Activated naive CD4-positive, alpha-beta T cell treated with anti-CD3 and anti-CD28 coated beads for 36 hours (primary cell): ENCODE measurements at regions of chr1 and their contacts with region 1.

Region 1: GRCh38 chr1:91282695-91283420 is 121.8 kb downstream of the HFM1 start:
- DNase-seq: peak; percentile 65
- H3K4me3 Mint-ChIP-seq: no peak overlapping the region
- H3K27ac Mint-ChIP-seq: no peak overlapping the region
- H3K4me1 Mint-ChIP-seq: peaks cover 1% of the 10 kb centered on the region
- H3K27me3 Mint-ChIP-seq: peaks cover 6% of the 10 kb centered on the region

Region 2: GRCh38 chr1:90579212-90579802 is 703.6 kb before region 1 on chr1:
- CTCF ChIA-PET with region 1: no interaction called
- intact Hi-C with region 1: loop called (anchors 1 kb)
- DNase-seq: no peak
- H3K4me3 Mint-ChIP-seq: no peak overlapping the region
- H3K27ac Mint-ChIP-seq: no peak overlapping the region
- H3K4me1 Mint-ChIP-seq: no peaks in the 10 kb centered on the region
- H3K27me3 Mint-ChIP-seq: peaks cover 6% of the 10 kb centered on the region

Region 3: DNA sequence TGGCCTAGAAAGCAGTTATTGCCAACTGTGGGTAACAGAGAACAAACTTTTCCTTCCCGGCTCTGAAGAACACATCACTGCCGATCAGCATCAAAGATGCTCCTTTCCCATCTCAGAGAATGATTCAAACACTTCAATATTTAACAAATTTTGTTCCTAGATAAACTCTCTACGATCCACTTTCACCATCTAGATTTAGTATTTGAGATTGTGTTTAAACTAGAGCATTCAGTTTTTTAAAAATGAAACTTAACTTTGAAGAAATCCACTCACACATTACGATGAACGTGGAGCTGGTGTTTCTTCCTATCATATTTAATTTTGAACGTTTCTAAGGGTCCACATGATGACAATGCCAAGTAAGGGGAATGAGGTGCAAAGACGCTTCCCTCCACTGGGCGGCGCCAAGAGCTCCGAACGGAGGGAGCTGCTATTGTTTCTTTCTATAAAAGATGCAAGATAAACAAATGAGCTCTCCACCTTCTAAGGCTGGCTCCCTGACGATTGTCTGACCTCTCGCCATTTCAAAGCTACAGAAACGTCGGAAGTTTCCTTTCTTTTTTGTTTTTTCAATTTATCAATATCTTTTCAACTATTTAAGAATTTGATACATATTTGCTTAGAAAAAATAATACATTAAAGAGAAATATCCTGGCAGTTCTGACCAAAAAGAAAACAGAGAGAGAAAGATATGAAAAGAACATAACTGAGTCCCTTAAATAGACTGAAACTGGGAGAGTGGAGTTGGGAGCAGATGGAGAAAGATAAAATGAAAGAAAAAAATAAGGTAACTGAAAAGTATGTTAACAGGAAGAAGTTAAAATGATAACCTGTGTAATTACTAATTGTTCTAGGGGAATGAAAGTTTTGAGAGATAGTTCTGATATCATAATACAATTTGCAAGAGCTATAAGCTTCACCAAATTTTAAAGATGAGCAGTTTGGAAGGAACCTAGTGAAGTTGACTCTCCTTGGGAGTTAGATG is 561.4 kb before region 1 on chr1:
- CTCF ChIA-PET with region 1: no interaction called
- intact Hi-C with region 1: loop called (anchors 5 kb)
- DNase-seq: peak; percentile 72
- H3K4me3 Mint-ChIP-seq: no peak overlapping the region
- H3K27ac Mint-ChIP-seq: no peak overlapping the region
- H3K4me1 Mint-ChIP-seq: peaks cover 58% of the 10 kb centered on the region
- H3K27me3 Mint-ChIP-seq: peaks cover 83% of the 10 kb centered on the region

Region 4: GRCh38 chr1:91314643-91315042 is 31.8 kb after region 1 on chr1:
- CTCF ChIA-PET with region 1: no interaction called
- intact Hi-C with region 1: no loop called
- DNase-seq: no peak
- H3K4me3 Mint-ChIP-seq: no peak overlapping the region
- H3K27ac Mint-ChIP-seq: no peak overlapping the region
- H3K4me1 Mint-ChIP-seq: no peaks in the 10 kb centered on the region
- H3K27me3 Mint-ChIP-seq: peaks cover 16% of the 10 kb centered on the region

Region 5: DNA sequence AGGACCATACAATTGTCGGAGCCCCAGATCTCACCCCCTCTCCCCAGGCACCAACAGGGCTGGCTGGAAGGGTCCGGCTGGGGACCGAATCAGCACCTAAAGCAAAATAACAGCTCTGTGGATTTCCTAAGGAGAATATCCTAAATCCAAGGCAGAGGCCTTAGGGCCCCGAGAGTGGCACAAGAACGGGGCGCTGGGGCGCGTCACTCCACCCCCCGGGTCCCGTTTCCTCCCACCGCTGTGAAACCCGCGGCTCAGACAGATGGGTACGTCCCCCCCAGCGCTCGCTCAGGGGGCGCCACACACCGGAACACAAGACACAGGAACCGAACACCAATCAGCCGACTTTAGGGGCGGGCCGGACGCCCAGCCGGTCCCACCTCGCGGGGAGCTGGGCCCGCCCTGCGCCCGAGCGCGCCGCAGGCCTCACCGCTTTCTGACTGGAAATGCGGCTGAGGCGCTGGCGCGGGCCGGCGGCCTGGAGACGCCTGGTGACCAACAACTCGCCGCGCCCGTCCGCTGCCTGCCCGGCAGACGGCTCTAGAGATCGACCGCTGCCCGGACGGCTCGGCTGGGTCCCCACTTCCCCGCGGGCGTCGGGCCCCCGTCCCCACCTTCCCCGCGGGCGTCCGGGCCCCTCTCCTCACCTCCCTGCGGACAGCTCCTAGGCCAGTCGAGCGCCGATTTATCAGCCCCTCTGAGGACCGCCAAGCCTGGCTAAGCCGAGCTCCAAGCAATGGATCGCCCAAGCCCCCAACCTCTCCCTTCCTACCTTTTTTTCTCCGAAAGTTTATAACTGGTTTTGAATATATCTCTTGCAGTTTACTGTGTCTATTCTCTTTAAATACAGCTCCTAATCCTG is 121.5 kb after region 1 on chr1 and contains the start of gene HFM1:
- CTCF ChIA-PET with region 1: interaction called, 6 read pairs
- intact Hi-C with region 1: loop called (anchors 1 kb)
- DNase-seq: peak; percentile 63
- H3K4me3 Mint-ChIP-seq: peak within 1 kb of the TSS; percentile 72
- H3K27ac Mint-ChIP-seq: no peak within 1 kb of the TSS
- H3K4me1 Mint-ChIP-seq: peaks cover 2% of the 10 kb centered on the region
- H3K27me3 Mint-ChIP-seq: peaks cover 42% of the 10 kb centered on the region
- total RNA-seq, gene HFM1: not detected

Region 6: DNA sequence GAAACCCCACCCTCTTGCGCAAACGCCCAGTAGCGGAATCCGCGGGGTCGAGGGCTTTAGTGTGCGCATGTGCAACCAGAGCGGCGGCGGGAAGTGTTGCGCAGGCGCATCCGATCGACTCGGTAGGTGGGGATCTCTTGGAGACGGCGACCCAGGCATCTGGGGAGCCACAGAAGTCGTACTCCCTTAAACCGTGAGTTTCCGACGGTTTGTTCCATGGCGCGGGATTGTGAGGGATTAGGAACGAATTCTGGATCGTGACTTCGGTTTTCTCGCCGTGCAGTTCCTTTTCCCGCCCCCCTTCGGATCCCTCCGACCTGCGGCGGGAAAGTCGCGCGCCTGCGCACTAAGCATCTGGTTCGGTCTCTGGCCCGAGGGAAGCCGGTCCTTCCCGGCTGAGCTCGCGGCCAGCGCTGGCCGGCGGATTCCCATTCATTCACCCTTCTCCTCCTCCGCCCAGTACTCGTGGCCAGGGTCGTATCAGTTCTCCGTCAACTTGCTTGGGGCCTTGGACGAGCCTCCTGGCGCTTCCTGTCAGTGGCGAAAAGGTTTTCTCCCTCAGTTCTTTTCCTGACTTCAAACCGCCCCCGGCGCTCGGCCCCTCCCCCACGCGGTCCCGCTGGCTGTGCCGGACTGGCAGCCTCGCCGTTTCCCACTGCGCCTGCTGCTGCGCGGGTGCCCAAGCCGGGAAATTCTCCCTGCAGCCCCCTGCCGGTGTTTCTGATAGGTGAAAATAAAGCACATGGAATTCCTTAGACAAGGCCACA is 218.1 kb after region 1 on chr1 and contains the start of gene CDC7:
- CTCF ChIA-PET with region 1: interaction called, 4 read pairs
- intact Hi-C with region 1: loop called (anchors 2 kb)
- DNase-seq: peak; percentile 87
- H3K4me3 Mint-ChIP-seq: no peak within 1 kb of the TSS
- H3K27ac Mint-ChIP-seq: no peak within 1 kb of the TSS
- H3K4me1 Mint-ChIP-seq: peaks cover 15% of the 10 kb centered on the region
- H3K27me3 Mint-ChIP-seq: no peaks in the 10 kb centered on the region
- total RNA-seq, gene CDC7: 27.0 TPM

Region 7: GRCh38 chr1:91929250-91929649 is 646.4 kb after region 1 on chr1:
- CTCF ChIA-PET with region 1: interaction called, 13 read pairs
- intact Hi-C with region 1: loop called (anchors 1 kb)
- DNase-seq: no peak
- H3K4me3 Mint-ChIP-seq: no peak overlapping the region
- H3K27ac Mint-ChIP-seq: no peak overlapping the region
- H3K4me1 Mint-ChIP-seq: peaks cover 1% of the 10 kb centered on the region
- H3K27me3 Mint-ChIP-seq: no peaks in the 10 kb centered on the region

Region 8: DNA sequence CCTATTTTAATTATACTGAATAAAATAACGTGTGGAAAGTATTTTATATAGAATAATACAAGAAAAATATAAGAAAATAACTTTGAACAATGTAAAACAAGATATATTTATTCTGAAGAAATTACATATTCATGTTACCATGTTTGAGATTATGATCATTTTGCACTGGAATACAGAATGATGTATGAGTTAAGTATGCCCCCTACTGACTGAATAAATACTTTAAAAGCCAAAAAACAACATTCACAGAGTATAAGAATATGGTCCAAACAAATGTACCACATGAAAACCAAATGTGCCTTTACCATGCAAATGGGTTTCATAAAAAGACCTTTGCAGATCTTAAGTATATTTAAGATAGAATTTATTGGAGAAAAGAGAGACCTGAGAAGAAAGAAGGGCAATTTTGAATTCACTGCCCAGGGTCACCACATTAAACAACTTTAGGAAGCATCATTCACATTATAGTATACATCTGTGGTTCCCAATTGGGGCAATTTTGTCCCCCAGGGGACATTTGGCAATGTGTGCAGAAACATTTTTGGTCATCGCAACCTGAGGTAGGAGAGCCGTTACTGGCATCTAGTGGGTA is 1340.4 kb after region 1 on chr1:
- CTCF ChIA-PET with region 1: no interaction called
- intact Hi-C with region 1: loop called (anchors 10 kb)
- DNase-seq: no peak
- H3K4me3 Mint-ChIP-seq: no peak overlapping the region
- H3K27ac Mint-ChIP-seq: no peak overlapping the region
- H3K4me1 Mint-ChIP-seq: peaks cover 16% of the 10 kb centered on the region
- H3K27me3 Mint-ChIP-seq: no peaks in the 10 kb centered on the region